ENCODE measurements at regions of chr15 and their contacts with region 1.

Region 1: DNA sequence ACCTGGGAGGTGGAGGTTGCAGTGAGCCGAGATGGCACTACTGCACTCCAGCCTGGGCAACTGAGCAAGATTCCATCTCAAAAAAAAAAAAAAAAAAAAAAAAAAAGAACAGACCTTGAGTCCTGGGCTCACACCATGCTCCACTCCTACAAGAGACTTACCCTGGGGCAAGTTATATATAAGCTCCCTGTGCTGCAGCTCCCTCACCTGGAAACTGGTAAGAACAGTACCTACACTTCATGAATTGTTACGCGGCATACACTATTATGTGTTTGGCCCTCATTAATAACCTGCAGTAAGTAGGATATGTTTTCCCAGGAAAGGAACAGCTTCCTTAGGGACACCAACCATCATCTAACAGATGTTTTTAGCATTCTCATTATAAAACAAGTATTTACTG is 119.6 kb downstream of the FMN1 start:
- DNase-seq: no peak
- ATAC-seq: peak in 3 of 4 donors; percentile 37 to 52 (median 51)
- H3K4me3 ChIP-seq: no peak overlapping the region
- H3K27ac ChIP-seq: no peak overlapping the region
- H3K4me1 ChIP-seq: no peaks in the 10 kb centered on the region
- H3K27me3 ChIP-seq: no peaks in the 10 kb centered on the region
- CTCF ChIP-seq: no peak
- POLR2A ChIP-seq: no peak

Region 2: DNA sequence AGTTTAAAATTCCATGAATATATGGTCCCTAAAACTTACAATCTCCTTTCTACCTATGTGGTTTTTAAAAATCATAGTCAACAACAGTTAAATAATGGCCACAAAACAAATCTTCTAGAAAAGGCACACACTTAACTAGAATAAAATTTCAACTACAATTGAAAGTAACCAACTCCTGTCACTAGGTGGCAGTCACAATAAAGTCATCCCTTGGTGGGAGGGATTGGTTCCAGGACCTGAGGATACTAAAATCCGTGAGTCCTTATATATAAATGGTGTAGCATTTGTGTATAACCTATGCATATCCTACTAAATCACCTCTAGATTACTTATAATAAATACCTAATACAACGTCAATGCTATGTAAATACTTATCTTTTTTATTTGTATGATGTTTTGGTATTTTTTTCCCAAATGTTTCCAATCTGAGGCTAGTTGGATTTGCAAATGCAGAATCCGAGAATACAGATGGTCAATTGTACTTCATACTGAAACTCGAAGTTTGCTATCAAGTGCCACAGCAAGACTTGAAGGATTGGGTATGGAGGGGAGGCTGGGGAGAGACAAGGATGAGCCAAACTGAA is 53.0 kb before region 1 on chr15:
- intact Hi-C with region 1: loop called in 5 of 10 experiments (anchors 1 to 5 kb)
- DNase-seq: no peak
- ATAC-seq: peak; percentile 50 to 84 (median 69)
- H3K4me3 ChIP-seq: no peak overlapping the region
- H3K27ac ChIP-seq: peak overlapping the region in 11 of 12 donors; percentile 50 to 80 (median 63)
- H3K4me1 ChIP-seq: peaks cover 0 to 30% (median 9%) of the 10 kb centered on the region in 12 donors
- H3K27me3 ChIP-seq: no peaks in the 10 kb centered on the region
- CTCF ChIP-seq: peak; percentile 38 to 70 (median 56)
- POLR2A ChIP-seq: no peak